ENCODE measurements at regions of chr6 and their contacts with region 1.

Region 1: DNA sequence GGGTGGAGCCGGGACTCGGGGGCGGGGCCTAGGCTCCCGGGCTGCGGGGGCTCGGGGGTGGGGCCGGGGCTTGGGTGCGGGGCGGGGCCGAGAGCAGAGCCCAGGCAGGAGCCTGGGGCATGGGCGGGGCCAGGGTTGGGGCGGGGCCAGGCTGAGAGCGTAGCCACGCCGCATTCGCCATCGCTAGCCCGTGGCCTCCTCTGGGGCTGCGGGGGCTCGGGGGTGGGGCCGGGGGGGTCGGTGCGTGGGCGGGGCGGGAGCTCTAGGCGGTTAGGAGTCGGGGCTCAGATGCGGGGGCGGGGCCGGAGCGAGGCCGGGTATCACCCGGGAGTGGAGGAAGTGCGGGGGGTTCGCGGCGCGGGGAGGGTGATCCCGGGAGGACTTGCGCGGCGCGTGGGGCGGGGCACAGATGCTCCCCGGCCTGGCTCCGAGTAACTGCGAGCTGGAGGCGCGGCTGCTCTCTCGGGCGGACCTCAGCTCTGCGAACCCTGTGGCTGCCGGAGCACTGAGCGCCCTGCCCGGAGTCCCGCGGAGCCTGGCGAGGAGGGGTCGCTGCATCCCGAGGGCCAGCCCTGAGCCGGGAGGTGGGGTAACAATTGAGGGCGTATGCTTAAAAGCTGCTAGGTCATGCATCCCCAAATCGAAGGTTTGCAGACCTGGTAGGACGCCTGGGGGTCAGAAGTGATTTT is 434 bp upstream of the ECI2 start:
- DNase-seq: peak; percentile 98 to 99
- ATAC-seq: peak; percentile 95 to 99 (median 96)
- H3K4me3 ChIP-seq: peak overlapping the region; percentile 33 to 96 (median 75)
- H3K27ac ChIP-seq: peak overlapping the region; percentile 75 to 96 (median 92)
- H3K4me1 ChIP-seq: peaks cover 8 to 27% (median 19%) of the 10 kb centered on the region in 9 donors
- H3K27me3 ChIP-seq: no peaks in the 10 kb centered on the region
- CTCF ChIP-seq: peak in 2 of 9 donors; percentile 10 to 13

Region 2: DNA sequence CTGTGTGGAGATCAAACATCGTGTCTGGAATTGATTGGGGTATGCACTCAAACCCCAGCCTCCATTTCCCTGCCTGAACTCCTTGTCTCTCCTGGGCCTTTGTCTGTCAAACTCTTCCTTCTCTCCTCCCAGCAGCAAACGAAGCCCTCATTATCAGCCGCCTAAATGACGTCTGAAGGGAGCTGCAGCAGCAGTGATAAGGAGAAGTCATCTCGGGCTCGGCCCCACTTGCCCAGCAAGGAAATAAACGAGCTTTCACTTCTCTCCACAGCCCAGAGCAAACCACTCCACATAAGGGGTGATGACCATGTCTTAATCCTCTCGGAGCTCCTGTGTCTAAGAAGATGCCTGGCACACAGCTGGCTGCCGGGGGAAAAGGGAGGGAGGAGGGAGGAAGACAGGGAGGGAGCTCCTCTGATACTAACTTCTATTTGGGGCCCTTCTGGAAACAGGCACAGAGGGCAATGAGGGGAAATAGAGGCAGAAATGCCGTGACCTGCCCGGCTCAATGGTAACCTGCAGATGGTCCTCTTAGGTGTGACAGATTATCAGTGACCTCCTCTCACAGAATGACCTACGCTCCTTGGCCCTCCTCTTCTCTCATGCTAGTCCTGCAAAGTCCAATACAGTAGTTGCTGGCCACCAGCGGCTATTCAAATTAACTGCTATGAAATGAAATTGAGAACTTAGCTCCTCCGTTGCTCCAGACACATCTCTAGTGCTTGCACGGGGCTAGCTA is 484.7 kb before region 1 on chr6:
- intact Hi-C with region 1: no loop called
- DNase-seq: no peak
- ATAC-seq: no peak
- H3K4me3 ChIP-seq: no peak overlapping the region
- H3K27ac ChIP-seq: no peak overlapping the region
- H3K4me1 ChIP-seq: no peaks in the 10 kb centered on the region
- H3K27me3 ChIP-seq: peaks cover 0 to 4% (median 0%) of the 10 kb centered on the region in 7 donors
- CTCF ChIP-seq: no peak

Region 3: GRCh38 chr6:4066029-4066755 is 69.6 kb before region 1 on chr6:
- intact Hi-C with region 1: loop called in 1 of 10 experiments (anchors 5 kb)
- DNase-seq: no peak
- ATAC-seq: no peak
- H3K4me3 ChIP-seq: no peak overlapping the region
- H3K27ac ChIP-seq: no peak overlapping the region
- H3K4me1 ChIP-seq: no peaks in the 10 kb centered on the region
- H3K27me3 ChIP-seq: no peaks in the 10 kb centered on the region
- CTCF ChIP-seq: no peak

Region 4: DNA sequence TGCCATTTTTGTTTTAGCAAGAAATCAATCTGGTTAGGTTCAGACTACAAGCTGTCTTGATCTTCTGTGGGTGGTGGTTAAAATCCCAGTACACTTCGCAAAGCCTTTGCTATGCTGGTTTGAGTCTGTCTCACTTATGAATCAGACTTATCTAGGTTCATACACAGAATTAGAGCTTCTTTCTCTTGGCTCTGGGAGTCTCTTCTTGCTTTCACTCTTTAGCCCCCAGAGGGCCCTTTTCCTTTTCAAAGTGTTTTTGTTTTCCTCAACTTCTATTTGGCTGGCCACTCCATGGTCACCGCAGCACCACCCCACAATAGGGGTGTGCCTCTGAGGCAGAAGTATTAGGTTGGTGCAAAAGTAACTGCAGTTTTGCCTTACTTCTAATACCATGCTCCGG is 21.7 kb before region 1 on chr6:
- intact Hi-C with region 1: loop called in 1 of 10 experiments (anchors 2 kb)
- DNase-seq: no peak
- ATAC-seq: no peak
- H3K4me3 ChIP-seq: no peak overlapping the region
- H3K27ac ChIP-seq: no peak overlapping the region
- H3K4me1 ChIP-seq: peaks cover 0 to 14% (median 8%) of the 10 kb centered on the region in 9 donors
- H3K27me3 ChIP-seq: no peaks in the 10 kb centered on the region
- CTCF ChIP-seq: no peak

Region 5: DNA sequence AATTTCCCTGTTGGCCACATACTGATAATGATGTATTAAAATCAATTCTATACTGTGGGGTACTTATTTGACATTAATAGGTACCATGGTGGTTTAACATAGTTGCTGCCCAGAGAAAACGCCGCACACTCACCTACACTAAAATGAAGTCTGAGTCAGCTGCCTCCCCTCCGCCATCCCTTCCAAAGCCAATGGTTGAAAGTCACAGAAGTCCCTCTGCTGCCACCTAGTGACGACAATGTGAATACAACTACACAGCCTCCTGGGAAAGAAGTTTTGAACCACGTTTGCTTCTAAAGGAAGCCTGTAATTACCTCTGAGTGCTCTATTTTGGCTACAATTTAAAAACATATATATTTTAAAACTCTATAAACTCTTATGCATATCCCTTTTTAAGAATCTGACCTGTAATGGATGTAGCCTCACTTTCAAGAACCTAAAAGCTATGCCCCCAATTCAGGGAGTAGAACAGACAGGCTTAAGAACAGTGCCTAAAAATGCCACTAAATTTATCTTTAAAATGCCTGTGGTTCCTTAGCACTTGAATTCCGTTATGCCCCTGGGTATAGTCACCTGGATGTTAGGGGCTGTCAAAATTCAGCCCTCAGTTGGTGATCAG is 20.1 kb after region 1 on chr6:
- intact Hi-C with region 1: loop called in 1 of 10 experiments (anchors 1 kb)
- DNase-seq: peak in 1 of 2 donors; percentile 86
- ATAC-seq: peak; percentile 77 to 92 (median 86)
- H3K4me3 ChIP-seq: no peak overlapping the region
- H3K27ac ChIP-seq: no peak overlapping the region
- H3K4me1 ChIP-seq: peaks cover 0 to 4% (median 0%) of the 10 kb centered on the region in 9 donors
- H3K27me3 ChIP-seq: no peaks in the 10 kb centered on the region
- CTCF ChIP-seq: peak; percentile 80 to 93 (median 88)

Measured in heart right ventricle (tissue), 16 donors.